ENCODE measurements at regions of chr6 and their contacts with region 1.

Region 1: DNA sequence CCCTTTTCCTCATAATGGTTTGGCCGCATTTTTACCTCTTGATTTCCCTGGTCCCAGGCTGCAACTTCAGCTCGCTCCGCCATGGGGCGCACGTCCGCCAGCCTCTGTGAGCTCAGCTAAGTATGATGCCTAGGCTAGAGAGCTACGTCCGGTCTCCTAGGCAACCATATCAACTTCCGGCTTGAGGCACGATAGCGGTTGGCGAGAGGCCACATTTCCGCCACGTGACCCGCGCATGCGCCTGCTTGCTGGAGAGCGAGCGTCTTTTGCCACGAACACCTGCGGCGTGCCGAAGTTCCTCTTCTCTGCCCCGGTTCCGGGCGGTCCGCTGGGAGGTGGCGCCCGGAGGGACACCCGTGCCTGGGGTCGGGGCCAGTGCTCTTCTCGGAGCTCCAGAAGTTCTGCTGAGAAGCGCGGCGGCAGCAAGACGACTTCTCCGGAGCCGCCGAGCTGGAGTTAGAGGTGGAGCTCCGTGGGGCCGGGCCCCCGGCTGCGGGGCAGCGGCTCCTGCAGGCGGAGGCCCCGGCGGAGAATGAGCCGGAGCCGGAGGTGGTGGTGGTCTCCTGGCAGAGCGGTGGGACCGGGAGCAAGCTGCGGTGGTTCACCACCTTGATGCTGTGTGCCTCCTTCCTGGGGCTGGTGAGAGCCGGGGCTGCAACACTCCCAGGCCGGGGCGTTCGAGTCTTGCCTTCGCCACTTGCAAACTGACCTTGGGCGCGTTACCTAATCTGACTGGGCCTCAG is 172.0 kb downstream of the SLC16A10 start:
- DNase-seq: peak; percentile 99
- ATAC-seq: peak; percentile 96
- H3K4me3 Mint-ChIP-seq: peak overlapping the region; percentile 78
- H3K27ac Mint-ChIP-seq: peak overlapping the region; percentile 56
- H3K4me1 Mint-ChIP-seq: peaks cover 30% of the 10 kb centered on the region
- H3K27me3 Mint-ChIP-seq: no peaks in the 10 kb centered on the region

Region 2: DNA sequence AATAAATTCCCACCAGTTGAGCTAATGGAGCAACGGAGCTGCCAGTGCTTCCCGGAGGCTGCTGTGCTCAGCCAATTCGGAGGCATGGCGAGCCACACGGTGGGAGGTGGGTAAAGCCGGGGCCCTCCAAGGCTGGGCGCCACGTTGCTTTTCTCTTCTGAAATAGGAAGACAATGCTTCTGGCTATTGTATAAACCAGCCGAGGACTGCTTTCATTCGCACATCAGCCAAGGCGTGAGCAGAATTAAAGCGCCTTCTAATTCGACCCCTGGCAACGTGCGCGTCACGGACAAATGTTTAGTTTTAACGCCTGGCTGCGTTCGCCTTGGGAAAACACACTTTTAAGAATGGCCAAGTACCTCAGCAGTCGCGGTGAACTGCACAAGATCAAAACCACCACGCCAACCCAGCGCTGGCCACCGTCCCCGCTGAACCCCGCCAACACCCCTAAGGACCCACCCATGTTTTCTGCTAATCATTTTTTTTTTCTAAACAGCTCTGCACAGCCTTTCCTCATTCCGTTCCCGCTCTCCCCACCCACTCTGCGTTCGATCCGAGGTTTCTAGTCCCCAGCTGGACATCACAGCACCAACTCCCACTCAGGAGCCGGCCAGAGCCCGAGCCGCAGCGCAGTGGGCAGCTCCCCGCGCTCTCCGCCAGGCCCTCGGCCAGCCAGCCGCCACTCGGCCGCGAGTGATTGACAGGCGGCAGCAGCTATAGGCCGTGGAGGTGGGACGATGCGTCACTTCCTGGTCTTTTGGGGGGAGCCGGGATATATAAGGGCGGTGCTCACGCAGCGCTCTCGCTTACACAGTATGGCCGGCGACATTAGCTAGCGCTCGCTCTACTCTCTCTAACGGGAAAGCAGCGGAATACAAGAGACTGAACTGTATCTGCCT is 385.0 kb before region 1 on chr6 and contains the start of gene AMD1:
- CTCF ChIA-PET with region 1: no interaction called
- POLR2A ChIA-PET with region 1: interaction called, 6 read pairs
- intact Hi-C with region 1: loop called in 1 of 2 experiments (anchors 1 kb)
- DNase-seq: peak; percentile 97
- ATAC-seq: peak; percentile 79
- H3K4me3 Mint-ChIP-seq: peak within 1 kb of the TSS; percentile 93
- H3K27ac Mint-ChIP-seq: peak within 1 kb of the TSS; percentile 98
- H3K4me1 Mint-ChIP-seq: peaks cover 25% of the 10 kb centered on the region
- H3K27me3 Mint-ChIP-seq: no peaks in the 10 kb centered on the region
- total RNA-seq, gene AMD1: 90.5 to 127 TPM

Region 3: DNA sequence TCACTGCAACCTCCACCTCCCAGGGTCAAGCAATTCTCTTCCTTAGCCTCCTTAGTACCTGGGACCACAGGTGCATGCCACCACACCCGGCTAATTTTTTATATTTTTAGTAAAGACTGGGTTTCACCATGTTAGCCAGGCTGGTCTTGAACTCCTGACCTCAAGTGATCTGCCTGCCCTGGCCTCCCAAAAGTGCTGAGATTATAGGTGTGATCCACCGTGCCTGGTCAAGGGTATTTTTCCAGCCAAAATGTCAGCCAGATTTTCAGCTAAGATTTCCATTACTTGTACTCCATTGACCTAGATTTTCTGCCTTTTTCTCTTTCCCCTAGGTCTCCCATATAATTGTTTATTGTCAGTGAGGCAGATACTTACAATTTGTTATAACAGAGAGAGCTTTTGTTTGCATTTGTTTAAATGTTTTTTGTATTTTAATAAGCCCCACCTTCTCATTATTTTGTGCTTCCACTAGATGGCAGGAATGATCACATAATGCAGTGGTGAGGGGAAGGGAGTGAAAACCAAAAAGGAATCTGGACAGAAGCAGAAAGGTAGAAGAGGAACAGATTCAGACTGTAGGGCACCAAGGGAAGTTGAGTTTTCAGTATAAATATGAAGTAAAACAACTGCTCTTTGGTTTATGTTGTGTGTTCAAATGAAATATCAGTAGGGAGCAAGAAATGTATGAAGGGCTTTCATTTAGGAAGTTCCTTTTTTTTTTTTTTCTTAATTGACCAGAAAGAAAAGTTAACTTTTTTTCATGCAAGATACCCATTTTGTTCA is 247.7 kb before region 1 on chr6:
- CTCF ChIA-PET with region 1: interaction called, 7 read pairs
- POLR2A ChIA-PET with region 1: no interaction called
- intact Hi-C with region 1: loop called in 1 of 2 experiments (anchors 2 kb)
- DNase-seq: no peak
- ATAC-seq: peak; percentile 73
- H3K4me3 Mint-ChIP-seq: no peak overlapping the region
- H3K27ac Mint-ChIP-seq: no peak overlapping the region
- H3K4me1 Mint-ChIP-seq: peaks cover 4% of the 10 kb centered on the region
- H3K27me3 Mint-ChIP-seq: no peaks in the 10 kb centered on the region

Region 4: GRCh38 chr6:111200350-111201243 is 58.7 kb before region 1 on chr6:
- CTCF ChIA-PET with region 1: no interaction called
- POLR2A ChIA-PET with region 1: no interaction called
- intact Hi-C with region 1: no loop called
- DNase-seq: no peak
- ATAC-seq: no peak
- H3K4me3 Mint-ChIP-seq: no peak overlapping the region
- H3K27ac Mint-ChIP-seq: peak overlapping the region; percentile 14
- H3K4me1 Mint-ChIP-seq: peaks cover 21% of the 10 kb centered on the region
- H3K27me3 Mint-ChIP-seq: no peaks in the 10 kb centered on the region

Region 5: GRCh38 chr6:111228094-111228493 is 31.2 kb before region 1 on chr6:
- CTCF ChIA-PET with region 1: no interaction called
- POLR2A ChIA-PET with region 1: no interaction called
- intact Hi-C with region 1: no loop called
- DNase-seq: no peak
- ATAC-seq: no peak
- H3K4me3 Mint-ChIP-seq: no peak overlapping the region
- H3K27ac Mint-ChIP-seq: no peak overlapping the region
- H3K4me1 Mint-ChIP-seq: no peaks in the 10 kb centered on the region
- H3K27me3 Mint-ChIP-seq: no peaks in the 10 kb centered on the region

Region 6: GRCh38 chr6:111478749-111479148 is 219.5 kb after region 1 on chr6:
- CTCF ChIA-PET with region 1: interaction called, 27 read pairs
- POLR2A ChIA-PET with region 1: interaction called, 10 read pairs
- intact Hi-C with region 1: loop called (anchors 1 kb)
- DNase-seq: no peak
- ATAC-seq: peak; percentile 8
- H3K4me3 Mint-ChIP-seq: no peak overlapping the region
- H3K27ac Mint-ChIP-seq: no peak overlapping the region
- H3K4me1 Mint-ChIP-seq: peaks cover 40% of the 10 kb centered on the region
- H3K27me3 Mint-ChIP-seq: no peaks in the 10 kb centered on the region

Region 7: DNA sequence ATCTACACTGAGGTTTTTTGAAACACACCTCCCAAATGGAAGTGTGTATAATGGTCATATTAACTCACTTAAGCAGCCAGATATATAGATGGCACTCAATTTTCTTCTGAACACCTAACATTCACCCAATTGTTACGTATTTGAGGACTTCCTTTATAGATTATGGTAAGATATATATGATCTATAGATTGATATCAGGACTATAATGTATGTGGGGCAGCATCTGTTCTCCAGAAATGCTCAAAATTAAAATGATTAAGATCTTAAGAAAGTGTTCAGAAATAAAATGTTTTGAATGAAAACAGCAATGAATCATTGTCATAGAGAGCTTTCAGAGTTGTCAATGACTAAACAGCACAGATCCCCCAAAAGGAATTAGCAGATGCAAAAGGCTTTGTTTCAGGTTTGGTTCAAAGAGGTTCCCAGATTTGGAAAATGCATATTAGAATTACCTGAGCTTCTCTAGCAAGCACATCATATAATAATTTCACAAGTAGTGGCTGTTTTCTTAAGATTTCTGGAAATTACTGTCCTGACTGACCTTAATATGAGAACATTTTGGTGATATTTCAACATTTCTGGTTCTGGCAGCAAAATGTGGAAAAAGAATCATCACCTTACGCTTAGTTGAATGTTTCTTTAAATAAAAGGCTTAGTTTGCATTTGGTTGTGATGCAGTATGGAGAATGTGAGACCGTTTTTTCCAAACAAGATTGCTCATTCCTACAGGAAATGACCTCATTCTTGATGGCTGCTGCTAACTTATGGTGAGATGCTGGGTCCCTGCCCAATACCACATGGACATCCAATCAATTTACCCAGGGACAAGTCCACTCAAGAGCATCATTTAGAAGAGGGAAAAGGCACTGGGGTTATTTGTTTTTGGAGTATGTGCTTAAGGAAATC is 314.9 kb after region 1 on chr6:
- CTCF ChIA-PET with region 1: interaction called, 11 read pairs
- POLR2A ChIA-PET with region 1: no interaction called
- intact Hi-C with region 1: no loop called
- DNase-seq: peak; percentile 36
- ATAC-seq: peak; percentile 77
- H3K4me3 Mint-ChIP-seq: no peak overlapping the region
- H3K27ac Mint-ChIP-seq: peak overlapping the region; percentile 72
- H3K4me1 Mint-ChIP-seq: peaks cover 24% of the 10 kb centered on the region
- H3K27me3 Mint-ChIP-seq: no peaks in the 10 kb centered on the region

Region 8: DNA sequence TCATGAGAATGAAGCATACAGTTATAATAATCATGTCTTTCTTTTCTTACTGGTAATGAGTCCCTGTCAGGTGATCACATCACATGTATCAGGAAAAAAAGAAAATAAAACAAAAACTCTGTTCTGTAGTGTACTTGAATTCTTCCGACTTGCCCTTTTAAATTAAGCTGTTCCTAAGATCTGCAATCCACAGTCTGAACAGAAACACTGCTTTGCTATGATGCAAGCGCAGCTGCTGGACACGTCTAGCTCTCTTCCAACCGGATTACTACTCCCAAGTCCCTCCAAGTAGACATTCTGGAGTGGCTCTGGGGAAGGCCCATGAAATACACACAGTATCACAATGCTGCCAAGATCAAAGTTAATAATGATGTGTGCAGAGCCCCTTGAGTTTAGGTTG is 530.3 kb after region 1 on chr6:
- CTCF ChIA-PET with region 1: no interaction called
- POLR2A ChIA-PET with region 1: no interaction called
- intact Hi-C with region 1: no loop called
- DNase-seq: no peak
- ATAC-seq: no peak
- H3K4me3 Mint-ChIP-seq: no peak overlapping the region
- H3K27ac Mint-ChIP-seq: no peak overlapping the region
- H3K4me1 Mint-ChIP-seq: peaks cover 55% of the 10 kb centered on the region
- H3K27me3 Mint-ChIP-seq: no peaks in the 10 kb centered on the region

Region 9: GRCh38 chr6:111873178-111874024 is 614.1 kb after region 1 on chr6 and contains the start of gene FYN:
- CTCF ChIA-PET with region 1: no interaction called
- POLR2A ChIA-PET with region 1: no interaction called
- intact Hi-C with region 1: loop called in 1 of 2 experiments (anchors 2 kb)
- DNase-seq: peak; percentile 100
- ATAC-seq: peak; percentile 87
- H3K4me3 Mint-ChIP-seq: peak within 1 kb of the TSS; percentile 98
- H3K27ac Mint-ChIP-seq: peak within 1 kb of the TSS; percentile 91
- H3K4me1 Mint-ChIP-seq: peaks cover 35% of the 10 kb centered on the region
- H3K27me3 Mint-ChIP-seq: no peaks in the 10 kb centered on the region
- total RNA-seq, gene FYN: 345 to 504 TPM

Region 10: GRCh38 chr6:112163295-112164257 is 904.3 kb after region 1 on chr6:
- CTCF ChIA-PET with region 1: interaction called, 5 read pairs
- POLR2A ChIA-PET with region 1: no interaction called
- intact Hi-C with region 1: loop called in 1 of 2 experiments (anchors 1 kb)
- DNase-seq: peak; percentile 90
- ATAC-seq: peak; percentile 98
- H3K4me3 Mint-ChIP-seq: peak overlapping the region; percentile 43
- H3K27ac Mint-ChIP-seq: peak overlapping the region; percentile 51
- H3K4me1 Mint-ChIP-seq: peaks cover 16% of the 10 kb centered on the region
- H3K27me3 Mint-ChIP-seq: peaks cover 35% of the 10 kb centered on the region